CD14-positive monocyte (primary cell): ENCODE measurements at regions of chr13 and their contacts with region 1.

Region 1: GRCh38 chr13:97109841-97110492 is 112.2 kb upstream of the MBNL2 start:
- DNase-seq: peak; percentile 84 to 92 (median 87)
- H3K4me3 ChIP-seq: no peak overlapping the region
- H3K4me3 Mint-ChIP-seq: peak overlapping the region; percentile 16 to 87
- H3K27ac ChIP-seq: no peak overlapping the region
- H3K27ac Mint-ChIP-seq: peak overlapping the region in 3 of 7 donors; percentile 4 to 51 (median 47)
- H3K4me1 ChIP-seq: peaks cover 4 to 9% of the 10 kb centered on the region in 2 donors
- H3K4me1 Mint-ChIP-seq: peaks cover 12% of the 10 kb centered on the region
- H3K27me3 ChIP-seq: peaks cover 9 to 30% of the 10 kb centered on the region in 2 donors
- H3K27me3 Mint-ChIP-seq: peaks cover 28 to 42% (median 29%) of the 10 kb centered on the region in 3 donors
- CTCF ChIP-seq: peak; percentile 92

Region 2: DNA sequence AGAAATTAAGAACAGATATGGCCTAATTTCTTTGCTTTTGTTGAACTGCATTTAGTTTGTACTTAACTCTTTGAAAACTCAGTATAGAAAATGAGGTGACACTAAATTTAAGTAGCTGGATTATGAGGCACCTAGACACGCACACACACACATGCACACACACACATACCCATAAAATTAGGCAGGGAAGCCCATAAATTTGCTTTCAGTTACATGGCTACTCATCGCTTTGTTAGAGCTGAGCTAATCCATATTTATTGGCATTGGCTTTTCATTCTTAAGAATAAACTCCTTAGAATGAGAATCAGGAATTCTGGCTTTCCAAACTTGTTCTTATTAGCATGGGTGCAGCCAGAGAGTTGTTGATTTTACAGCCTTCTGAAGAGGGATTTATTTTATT is 50.5 kb after region 1 on chr13:
- intact Hi-C with region 1: no loop called
- DNase-seq: no peak
- H3K4me3 ChIP-seq: no peak overlapping the region
- H3K4me3 Mint-ChIP-seq: no peak overlapping the region
- H3K27ac ChIP-seq: no peak overlapping the region
- H3K27ac Mint-ChIP-seq: no peak overlapping the region
- H3K4me1 ChIP-seq: no peaks in the 10 kb centered on the region
- H3K4me1 Mint-ChIP-seq: no peaks in the 10 kb centered on the region
- H3K27me3 ChIP-seq: no peaks in the 10 kb centered on the region
- H3K27me3 Mint-ChIP-seq: peaks cover 0 to 5% (median 4%) of the 10 kb centered on the region in 3 donors
- CTCF ChIP-seq: no peak

Region 3: DNA sequence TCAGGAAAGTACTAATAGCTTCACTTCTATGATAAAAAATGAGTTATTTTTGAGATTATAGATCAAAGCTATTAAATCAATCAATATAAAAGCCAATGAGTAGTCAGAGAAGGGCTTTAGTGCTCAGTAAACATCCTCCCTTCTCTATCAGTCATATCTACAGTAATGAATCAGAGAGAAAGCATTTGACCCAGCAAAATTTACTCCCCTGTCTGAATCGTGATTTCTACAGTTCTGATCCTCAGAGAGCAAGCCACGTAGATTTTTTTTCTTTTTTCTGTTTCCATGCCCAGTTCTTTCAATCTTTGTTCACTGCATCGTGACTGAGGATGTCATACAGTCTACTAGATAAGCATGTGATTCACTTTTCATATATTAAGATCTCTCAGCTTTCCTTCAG is 96.0 kb after region 1 on chr13:
- intact Hi-C with region 1: loop called in 1 of 2 experiments (anchors 10 kb)
- DNase-seq: no peak
- H3K4me3 ChIP-seq: no peak overlapping the region
- H3K4me3 Mint-ChIP-seq: peak overlapping the region in 1 of 2 donors; percentile 54
- H3K27ac ChIP-seq: no peak overlapping the region
- H3K27ac Mint-ChIP-seq: no peak overlapping the region
- H3K4me1 ChIP-seq: peaks cover 14 to 18% of the 10 kb centered on the region in 2 donors
- H3K4me1 Mint-ChIP-seq: peaks cover 24% of the 10 kb centered on the region
- H3K27me3 ChIP-seq: peaks cover 51 to 59% of the 10 kb centered on the region in 2 donors
- H3K27me3 Mint-ChIP-seq: peaks cover 43 to 58% (median 45%) of the 10 kb centered on the region in 3 donors
- CTCF ChIP-seq: no peak

Region 4: GRCh38 chr13:97359181-97360057 is 249.5 kb after region 1 on chr13:
- intact Hi-C with region 1: loop called (anchors 2 to 5 kb)
- DNase-seq: peak; percentile 29 to 70 (median 69)
- H3K4me3 ChIP-seq: no peak overlapping the region
- H3K4me3 Mint-ChIP-seq: no peak overlapping the region
- H3K27ac ChIP-seq: no peak overlapping the region
- H3K27ac Mint-ChIP-seq: no peak overlapping the region
- H3K4me1 ChIP-seq: no peaks in the 10 kb centered on the region
- H3K4me1 Mint-ChIP-seq: no peaks in the 10 kb centered on the region
- H3K27me3 ChIP-seq: no peaks in the 10 kb centered on the region
- H3K27me3 Mint-ChIP-seq: no peaks in the 10 kb centered on the region
- CTCF ChIP-seq: peak; percentile 89